Esophagus muscularis mucosa (tissue), 4 donors: ENCODE measurements at regions of chr2 and their contacts with region 1.

Region 1: DNA sequence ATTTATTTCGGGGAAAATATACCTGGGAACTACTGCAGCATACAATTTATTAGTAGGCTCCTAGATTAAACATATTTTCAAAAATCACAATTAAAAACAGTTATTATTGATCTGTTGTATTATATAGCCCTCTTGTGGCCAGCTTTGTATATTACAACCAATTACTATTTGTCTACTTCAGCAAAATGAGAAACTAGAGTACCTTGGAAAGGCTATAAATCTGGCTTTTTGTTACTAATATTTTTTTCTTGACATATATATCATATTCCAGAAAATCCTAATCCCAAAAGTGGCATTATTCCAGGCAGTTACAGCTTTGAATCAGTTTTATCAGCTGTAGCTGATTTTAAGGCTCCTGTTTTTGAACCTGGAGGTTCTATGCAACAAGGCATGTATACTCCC is 101.2 kb downstream of the UBR3 start:
- DNase-seq: no peak
- H3K4me3 ChIP-seq: no peak overlapping the region
- H3K27ac ChIP-seq: no peak overlapping the region
- H3K4me1 ChIP-seq: no peaks in the 10 kb centered on the region
- H3K27me3 ChIP-seq: no peaks in the 10 kb centered on the region
- CTCF ChIP-seq: peak; percentile 66 to 73 (median 71)
- EP300 ChIP-seq: no peak
- POLR2A ChIP-seq: no peak

Region 2: DNA sequence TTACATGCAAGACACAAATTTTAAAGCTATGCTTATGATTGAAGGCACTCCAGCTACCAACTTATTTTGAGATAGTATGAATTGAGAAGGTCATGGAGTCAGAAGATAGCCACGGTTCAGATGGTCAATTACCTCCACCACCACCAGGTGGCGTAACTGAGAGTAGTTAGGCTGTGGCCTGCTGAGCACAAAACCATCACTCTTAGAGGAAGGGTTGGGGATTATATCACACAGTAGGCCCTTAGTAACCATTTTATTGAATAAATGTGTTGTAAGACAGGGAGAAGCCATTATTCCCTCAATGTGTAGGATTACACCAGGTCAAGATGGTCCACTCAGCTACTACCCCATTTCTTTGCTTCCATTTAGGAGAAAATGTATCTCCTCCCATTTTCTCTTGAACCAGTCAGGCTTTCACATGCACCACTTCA is 400.2 kb before region 1 on chr2:
- intact Hi-C with region 1: loop called (anchors 10 kb)
- DNase-seq: no peak
- H3K4me3 ChIP-seq: no peak overlapping the region
- H3K27ac ChIP-seq: no peak overlapping the region
- H3K4me1 ChIP-seq: no peaks in the 10 kb centered on the region
- H3K27me3 ChIP-seq: no peaks in the 10 kb centered on the region
- CTCF ChIP-seq: peak; percentile 65 to 88 (median 79)
- EP300 ChIP-seq: no peak
- POLR2A ChIP-seq: no peak

Region 3: GRCh38 chr2:169824373-169825333 is 103.8 kb before region 1 on chr2 and contains the start of gene METTL5:
- intact Hi-C with region 1: loop called (anchors 2 kb)
- DNase-seq: peak; percentile 93
- H3K4me3 ChIP-seq: peak within 1 kb of the TSS; percentile 70 to 92 (median 76)
- H3K27ac ChIP-seq: peak within 1 kb of the TSS; percentile 79 to 89 (median 86)
- H3K4me1 ChIP-seq: peaks cover 35 to 58% (median 50%) of the 10 kb centered on the region in 4 donors
- H3K27me3 ChIP-seq: no peaks in the 10 kb centered on the region
- CTCF ChIP-seq: peak in 2 of 3 experiments; percentile 97
- EP300 ChIP-seq: no peak
- POLR2A ChIP-seq: peak; percentile 77
- total RNA-seq, gene METTL5: 66.2 to 104 (median 75.2) TPM